ENCODE measurements at regions of chr20 and their contacts with region 1.

Region 1: GRCh38 chr20:5529331-5530148 is 212.8 kb upstream of the PROKR2 start:
- DNase-seq: peak; percentile 91
- H3K4me3 Mint-ChIP-seq: peak overlapping the region; percentile 12
- H3K27ac Mint-ChIP-seq: peak overlapping the region; percentile 87
- H3K4me1 Mint-ChIP-seq: peaks cover 28% of the 10 kb centered on the region
- H3K27me3 Mint-ChIP-seq: peaks cover 7% of the 10 kb centered on the region

Region 2: GRCh38 chr20:4813863-4814695 is 715.5 kb before region 1 on chr20:
- CTCF ChIA-PET with region 1: no interaction called
- DNase-seq: peak; percentile 79
- H3K4me3 Mint-ChIP-seq: peak overlapping the region; percentile 91
- H3K27ac Mint-ChIP-seq: peak overlapping the region; percentile 98
- H3K4me1 Mint-ChIP-seq: peaks cover 79% of the 10 kb centered on the region
- H3K27me3 Mint-ChIP-seq: no peaks in the 10 kb centered on the region

Region 3: DNA sequence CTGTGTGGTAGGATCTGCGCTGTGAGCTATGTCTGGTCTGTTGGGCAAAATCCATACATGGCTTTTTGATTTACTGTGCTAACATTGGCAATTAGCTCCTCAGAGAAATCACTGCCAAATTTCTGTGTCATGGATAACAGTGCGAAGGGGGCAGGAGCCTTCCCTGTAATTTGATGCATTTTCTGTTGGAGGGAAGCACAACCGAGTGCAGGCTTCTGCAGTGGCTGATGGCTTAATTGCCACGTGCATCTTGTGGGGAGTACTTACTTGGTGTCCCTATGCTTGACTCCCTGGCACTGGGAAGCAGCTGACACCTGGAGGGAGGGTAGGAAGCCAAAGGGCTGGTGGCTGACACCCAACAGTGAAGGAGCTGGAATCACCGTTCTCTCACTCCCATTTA is 113.5 kb before region 1 on chr20:
- CTCF ChIA-PET with region 1: no interaction called
- DNase-seq: no peak
- H3K4me3 Mint-ChIP-seq: no peak overlapping the region
- H3K27ac Mint-ChIP-seq: no peak overlapping the region
- H3K4me1 Mint-ChIP-seq: no peaks in the 10 kb centered on the region
- H3K27me3 Mint-ChIP-seq: peaks cover 3% of the 10 kb centered on the region

Region 4: GRCh38 chr20:5550733-5551529 is 21.4 kb after region 1 on chr20:
- CTCF ChIA-PET with region 1: interaction called, 14 read pairs
- DNase-seq: no peak
- H3K4me3 Mint-ChIP-seq: no peak overlapping the region
- H3K27ac Mint-ChIP-seq: peak overlapping the region; percentile 12
- H3K4me1 Mint-ChIP-seq: peaks cover 15% of the 10 kb centered on the region
- H3K27me3 Mint-ChIP-seq: no peaks in the 10 kb centered on the region

Region 5: DNA sequence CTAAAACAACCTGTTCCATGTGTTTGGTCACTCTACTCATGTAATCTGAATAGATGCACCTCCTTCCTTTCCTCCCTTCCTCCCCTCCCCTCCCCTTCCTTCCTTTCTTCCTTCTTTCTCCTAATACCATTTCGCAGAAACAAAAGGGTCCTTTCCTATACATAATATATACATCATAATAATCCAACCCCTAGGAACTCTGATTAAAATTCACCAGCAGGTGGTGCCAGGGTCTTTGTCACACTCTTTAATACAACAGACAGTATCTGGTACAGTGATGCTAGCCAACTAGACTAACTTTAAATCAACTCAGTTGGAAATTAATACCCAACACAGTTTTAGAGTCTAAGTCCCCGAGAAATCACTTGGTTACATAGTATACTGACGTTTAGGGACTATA is 39.5 kb after region 1 on chr20:
- CTCF ChIA-PET with region 1: interaction called, 25 read pairs
- DNase-seq: peak; percentile 70
- H3K4me3 Mint-ChIP-seq: no peak overlapping the region
- H3K27ac Mint-ChIP-seq: peak overlapping the region; percentile 68
- H3K4me1 Mint-ChIP-seq: peaks cover 41% of the 10 kb centered on the region
- H3K27me3 Mint-ChIP-seq: no peaks in the 10 kb centered on the region

Region 6: DNA sequence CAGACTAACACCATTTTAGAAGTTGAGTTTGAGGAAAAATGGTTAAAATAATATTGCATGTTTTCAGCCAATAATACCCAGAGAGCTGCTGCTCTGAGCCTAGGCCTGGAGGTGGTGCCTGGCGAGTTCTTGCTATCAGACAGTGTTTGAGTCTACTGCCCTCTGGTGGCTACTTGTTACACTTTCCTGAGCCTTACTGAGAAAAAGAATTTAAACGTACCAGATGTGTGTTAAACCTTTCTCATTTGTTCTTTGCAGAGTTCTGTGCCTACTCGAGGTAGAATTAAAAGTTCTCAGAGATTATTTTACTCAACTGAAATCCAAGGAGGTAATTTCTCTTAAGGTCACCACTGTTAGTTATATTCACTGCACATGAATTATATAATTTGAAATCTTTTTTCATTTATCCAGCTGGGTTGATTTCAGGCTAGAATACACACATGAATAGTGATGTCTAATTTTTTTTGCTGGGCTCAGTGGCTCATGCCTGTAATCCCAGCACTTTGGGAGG is 258.9 kb after region 1 on chr20:
- CTCF ChIA-PET with region 1: interaction called, 89 read pairs
- DNase-seq: peak; percentile 85
- H3K4me3 Mint-ChIP-seq: no peak overlapping the region
- H3K27ac Mint-ChIP-seq: peak overlapping the region; percentile 13
- H3K4me1 Mint-ChIP-seq: peaks cover 2% of the 10 kb centered on the region
- H3K27me3 Mint-ChIP-seq: no peaks in the 10 kb centered on the region

Region 7: DNA sequence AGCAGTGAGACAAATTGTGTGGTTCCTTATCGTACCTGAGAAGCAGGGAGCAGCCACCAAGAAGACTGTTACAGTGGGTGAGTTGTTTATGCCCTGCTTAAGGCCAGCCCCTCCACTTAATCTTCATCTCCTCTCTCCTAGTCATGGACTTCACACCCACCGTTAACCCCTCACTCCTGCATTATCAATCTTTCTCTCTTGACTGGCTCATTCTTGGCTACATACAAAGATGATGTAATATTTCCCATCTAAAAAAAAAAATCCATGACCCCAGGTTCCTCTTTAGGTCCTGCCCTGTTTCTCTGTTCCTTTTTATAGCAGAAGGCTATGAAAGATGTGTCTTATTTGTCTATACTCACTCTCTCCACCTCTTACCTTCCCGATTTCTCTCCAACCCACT is 293.0 kb after region 1 on chr20:
- CTCF ChIA-PET with region 1: interaction called, 10 read pairs
- DNase-seq: no peak
- H3K4me3 Mint-ChIP-seq: no peak overlapping the region
- H3K27ac Mint-ChIP-seq: no peak overlapping the region
- H3K4me1 Mint-ChIP-seq: no peaks in the 10 kb centered on the region
- H3K27me3 Mint-ChIP-seq: no peaks in the 10 kb centered on the region

Region 8: DNA sequence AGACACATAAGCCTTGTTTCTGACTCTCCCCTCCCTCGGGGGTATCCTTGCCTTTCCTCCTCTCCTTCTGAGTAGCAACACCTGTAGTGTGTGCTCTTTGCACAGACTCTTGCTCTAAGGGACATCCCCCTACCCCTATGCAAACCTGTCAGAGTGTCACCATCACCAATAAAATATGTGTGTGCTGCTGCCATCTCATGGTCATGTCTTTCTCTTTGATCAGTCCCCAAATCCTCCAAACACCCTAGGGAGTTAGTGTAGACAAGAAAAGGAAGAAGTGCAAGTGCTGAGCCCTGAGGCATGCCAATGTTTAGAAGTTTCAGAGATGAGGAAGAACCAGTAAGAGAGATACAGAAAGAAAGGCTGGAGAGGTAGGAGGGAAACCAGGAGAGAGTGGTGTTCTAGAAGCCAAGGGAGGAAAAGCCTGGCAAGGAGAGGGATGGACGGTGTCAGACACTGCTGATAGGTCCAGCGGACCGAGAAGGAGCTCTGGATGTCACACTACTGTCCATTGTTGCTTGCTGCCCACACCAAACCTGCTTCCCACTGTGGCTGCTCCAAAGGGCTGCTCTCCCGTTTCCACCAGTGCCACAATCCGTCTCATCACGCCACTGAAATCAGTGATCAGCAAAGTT is 404.4 kb after region 1 on chr20:
- CTCF ChIA-PET with region 1: interaction called, 19 read pairs
- DNase-seq: no peak
- H3K4me3 Mint-ChIP-seq: no peak overlapping the region
- H3K27ac Mint-ChIP-seq: no peak overlapping the region
- H3K4me1 Mint-ChIP-seq: no peaks in the 10 kb centered on the region
- H3K27me3 Mint-ChIP-seq: peaks cover 4% of the 10 kb centered on the region

Region 9: DNA sequence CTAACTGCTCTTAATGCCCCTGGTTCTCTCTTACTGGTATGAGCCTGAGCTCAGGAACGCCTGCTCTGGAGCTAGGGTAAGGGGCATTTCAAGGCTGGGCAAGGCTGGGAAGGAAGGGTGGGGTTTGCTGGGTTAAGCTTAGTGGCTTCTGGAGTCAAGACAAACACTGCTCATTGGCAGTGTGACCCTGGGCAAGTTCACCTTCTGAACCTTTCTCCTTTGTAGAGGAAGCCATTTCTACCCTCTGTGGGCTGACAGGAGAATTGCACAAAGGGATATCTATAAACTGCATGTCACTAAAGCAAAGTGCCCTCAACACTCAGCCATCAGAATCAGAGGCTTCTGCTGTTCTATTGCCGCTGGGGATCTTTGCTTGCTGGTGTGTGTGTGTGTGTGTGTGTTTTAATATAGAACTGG is 544.6 kb after region 1 on chr20:
- CTCF ChIA-PET with region 1: interaction called, 29 read pairs
- DNase-seq: peak; percentile 23
- H3K4me3 Mint-ChIP-seq: no peak overlapping the region
- H3K27ac Mint-ChIP-seq: no peak overlapping the region
- H3K4me1 Mint-ChIP-seq: peaks cover 3% of the 10 kb centered on the region
- H3K27me3 Mint-ChIP-seq: peaks cover 25% of the 10 kb centered on the region